ENCODE measurements at regions of chr1 and their contacts with region 1.

Region 1: DNA sequence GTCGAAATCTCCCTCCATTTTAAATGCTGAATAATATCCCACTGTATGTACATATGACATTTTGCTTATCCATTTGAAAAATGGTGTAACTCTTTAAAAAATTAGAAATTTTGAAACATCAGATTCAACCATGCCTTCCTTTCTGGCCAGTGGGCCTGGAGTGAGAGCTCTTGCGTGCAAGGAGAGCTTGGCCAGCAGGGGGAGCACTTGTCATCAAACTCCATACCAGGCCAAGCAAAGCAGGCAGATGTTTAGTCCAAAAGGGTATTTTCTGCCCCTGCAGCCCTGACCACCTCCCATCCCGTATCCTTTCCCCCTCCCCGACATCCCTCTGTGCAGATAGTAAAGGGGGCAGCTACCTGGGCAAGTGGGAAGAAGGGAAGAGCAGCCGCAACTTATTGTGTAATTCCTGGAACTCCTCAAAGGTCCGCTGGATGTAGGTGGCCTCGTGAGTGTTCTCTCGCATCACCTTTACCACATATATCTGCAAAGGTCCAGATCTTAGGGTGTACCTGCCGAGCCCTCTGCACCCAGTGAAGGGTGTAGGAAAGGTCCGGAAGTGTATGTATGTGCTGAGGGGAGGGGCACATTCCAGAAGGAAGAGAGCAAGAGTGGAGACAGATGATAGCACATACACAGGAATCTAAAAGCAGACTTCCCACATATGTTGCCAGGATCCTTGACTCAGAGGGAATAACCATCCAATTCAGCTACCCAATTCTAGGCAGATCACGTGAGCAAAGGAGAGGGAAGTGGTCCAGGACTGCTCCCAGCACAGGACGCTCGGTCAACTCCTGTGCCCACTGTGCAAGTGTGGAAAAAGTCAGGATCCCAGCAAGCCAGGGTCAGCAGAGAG is 19.9 kb upstream of the PPP1R15B start:
- DNase-seq: peak; percentile 64 to 91 (median 82)
- ATAC-seq: peak; percentile 84 to 95 (median 90)
- H3K4me3 ChIP-seq: no peak overlapping the region
- H3K27ac ChIP-seq: no peak overlapping the region
- H3K4me1 ChIP-seq: no peaks in the 10 kb centered on the region
- H3K27me3 ChIP-seq: no peaks in the 10 kb centered on the region
- CTCF ChIP-seq: peak; percentile 84 to 95 (median 92)

Region 2: GRCh38 chr1:204503122-204503912 is 71.8 kb after region 1 on chr1:
- intact Hi-C with region 1: loop called in 1 of 3 experiments (anchors 5 kb)
- DNase-seq: no peak
- ATAC-seq: peak in 3 of 4 donors; percentile 27 to 37 (median 35)
- H3K4me3 ChIP-seq: no peak overlapping the region
- H3K27ac ChIP-seq: peak overlapping the region in 2 of 4 donors; percentile 49 to 69
- H3K4me1 ChIP-seq: peaks cover 5 to 9% (median 7%) of the 10 kb centered on the region in 3 donors
- H3K27me3 ChIP-seq: no peaks in the 10 kb centered on the region
- CTCF ChIP-seq: peak; percentile 28 to 66 (median 56)

Region 3: GRCh38 chr1:204633665-204634064 is 202.1 kb after region 1 on chr1:
- intact Hi-C with region 1: no loop called
- DNase-seq: no peak
- ATAC-seq: no peak
- H3K4me3 ChIP-seq: no peak overlapping the region
- H3K27ac ChIP-seq: no peak overlapping the region
- H3K4me1 ChIP-seq: no peaks in the 10 kb centered on the region
- H3K27me3 ChIP-seq: no peaks in the 10 kb centered on the region
- CTCF ChIP-seq: no peak

Measured in pancreas (tissue), 10 donors.